ENCODE measurements at regions of chr3 and their contacts with region 1.

Region 1: DNA sequence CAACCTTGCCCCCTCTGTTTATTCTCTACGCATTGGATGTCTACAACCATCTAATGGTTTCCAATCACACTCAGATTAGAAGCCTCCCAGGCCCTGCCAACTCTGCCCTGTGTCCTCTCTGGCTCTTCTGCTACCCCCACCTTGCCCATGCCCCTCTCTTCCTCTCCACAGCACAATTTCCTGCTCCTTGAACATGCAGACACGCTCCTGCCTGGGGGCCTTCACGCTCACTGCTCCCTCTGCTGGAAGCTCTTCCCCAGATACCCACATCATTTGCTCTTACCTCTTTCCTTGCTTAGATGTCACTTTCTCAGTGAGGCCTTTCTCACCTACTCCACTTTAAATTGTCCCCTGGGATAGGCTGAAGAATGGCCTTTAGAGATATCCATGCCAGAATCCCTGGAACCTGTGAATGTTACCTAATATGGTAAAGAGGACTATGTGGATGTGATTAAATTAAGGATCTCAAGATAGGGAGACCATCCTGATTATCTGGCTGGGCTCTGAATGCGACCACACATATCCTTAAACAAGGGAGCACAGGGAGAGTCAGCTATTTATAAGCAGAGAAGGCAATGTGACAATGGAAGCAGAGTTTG is 9.9 kb downstream of the KY start:
- DNase-seq: peak in 1 of 2 experiments; percentile 57
- H3K4me3 ChIP-seq: no peak overlapping the region
- H3K27ac ChIP-seq: no peak overlapping the region
- H3K4me1 ChIP-seq: peaks cover 0 to 11% (median 5%) of the 10 kb centered on the region in 4 experiments; a peak in 3 of 7 replicates
- H3K27me3 ChIP-seq: peaks cover 0 to 5% (median 3%) of the 10 kb centered on the region in 4 experiments; a peak in 4 of 7 replicates
- CTCF ChIP-seq: peak; percentile 73 to 77 (median 73)
- EP300 ChIP-seq: no peak
- POLR2A ChIP-seq: no peak
- RAD21 ChIP-seq: peak; percentile 53 to 62

Region 2: DNA sequence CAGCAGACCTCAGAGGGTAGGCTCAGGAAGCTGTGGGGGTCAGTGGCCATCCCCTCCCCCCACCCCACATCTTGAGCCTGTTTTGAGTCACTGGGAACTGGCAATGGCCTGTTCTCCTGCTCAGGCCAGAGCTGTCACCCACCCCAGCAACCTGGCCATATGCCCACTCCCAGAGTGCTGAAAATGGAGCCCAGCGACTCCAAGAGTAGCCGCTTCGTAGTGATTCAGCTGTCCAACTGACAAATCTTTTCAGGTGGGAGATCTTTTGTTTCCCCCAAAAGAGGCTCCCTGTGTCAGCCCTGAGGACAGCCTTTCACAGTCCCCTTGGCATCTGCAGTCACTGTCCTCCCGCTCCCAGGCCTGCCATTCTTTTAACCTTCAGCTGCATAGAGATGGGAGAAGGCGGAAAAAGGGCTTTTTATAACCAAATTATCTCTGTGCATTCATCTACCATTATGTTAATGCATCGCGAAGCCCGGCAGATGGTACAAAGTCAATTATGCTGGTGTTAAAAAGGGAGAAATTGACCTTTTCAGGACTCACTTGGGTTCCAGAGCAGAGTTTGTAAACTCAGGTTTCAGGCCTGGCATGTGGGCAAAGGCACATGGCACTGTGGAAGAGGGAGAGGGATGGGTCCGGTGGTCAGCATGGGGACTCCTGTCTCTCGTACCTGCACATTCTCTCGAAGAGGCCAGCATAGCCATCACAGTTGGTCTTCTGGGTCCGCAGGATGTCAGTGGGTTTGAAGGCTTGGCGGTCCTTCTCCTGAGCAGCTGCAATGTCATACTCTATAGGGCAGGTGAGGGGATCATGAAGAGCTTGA is 22.3 kb before region 1 on chr3:
- CTCF ChIA-PET with region 1: interaction called, 25 read pairs
- POLR2A ChIA-PET with region 1: interaction called, 3 read pairs
- DNase-seq: peak in 1 of 2 experiments; percentile 33
- H3K4me3 ChIP-seq: no peak overlapping the region
- H3K27ac ChIP-seq: no peak overlapping the region
- H3K4me1 ChIP-seq: peaks cover 0 to 3% (median 0%) of the 10 kb centered on the region in 4 experiments; a peak in 1 of 7 replicates
- H3K27me3 ChIP-seq: no peaks in the 10 kb centered on the region
- CTCF ChIP-seq: no peak
- EP300 ChIP-seq: no peak
- POLR2A ChIP-seq: no peak
- RAD21 ChIP-seq: no peak

Region 3: DNA sequence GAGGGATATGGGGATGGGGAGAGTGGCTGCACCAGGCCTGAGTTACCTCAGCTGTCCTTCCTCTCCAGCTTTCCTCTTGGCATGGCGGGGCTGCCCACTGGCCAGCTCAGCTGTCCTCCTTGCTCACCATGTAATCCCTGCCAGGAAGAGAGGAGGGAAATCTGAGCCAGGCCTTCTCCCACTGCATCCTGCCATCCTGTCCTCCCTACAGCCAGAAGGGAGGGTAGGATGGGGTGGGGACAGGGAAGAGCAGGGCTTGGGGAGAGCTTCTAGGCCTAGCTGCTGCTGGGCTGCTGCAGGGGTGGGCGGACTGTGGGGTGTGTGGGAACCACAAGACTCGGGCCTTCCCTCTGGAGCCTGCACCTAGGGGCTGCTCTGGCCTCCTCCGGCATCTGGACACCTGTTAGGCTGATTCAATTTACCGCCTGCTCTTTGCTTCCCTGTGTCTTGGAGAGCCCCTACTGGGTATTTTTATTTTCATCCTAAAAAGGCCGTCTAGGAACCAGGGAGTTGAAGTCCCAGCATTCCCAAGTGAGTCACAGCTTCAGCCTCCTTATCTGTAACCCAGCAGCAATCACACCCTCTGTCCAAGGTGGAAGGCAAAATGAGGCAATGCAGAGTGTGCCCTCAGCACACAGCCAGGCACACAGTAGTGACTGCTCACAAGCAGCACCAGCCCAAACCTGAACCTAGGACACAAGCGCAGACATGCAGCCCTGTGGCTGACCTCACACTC is 22.9 kb after region 1 on chr3:
- CTCF ChIA-PET with region 1: interaction called, 11 read pairs
- POLR2A ChIA-PET with region 1: no interaction called
- DNase-seq: no peak
- H3K4me3 ChIP-seq: no peak overlapping the region
- H3K27ac ChIP-seq: no peak overlapping the region
- H3K4me1 ChIP-seq: peaks cover 0 to 5% (median 3%) of the 10 kb centered on the region in 4 experiments; a peak in 3 of 7 replicates
- H3K27me3 ChIP-seq: peaks cover 0 to 2% (median 0%) of the 10 kb centered on the region in 4 experiments; a peak in 2 of 7 replicates
- CTCF ChIP-seq: no peak
- EP300 ChIP-seq: no peak
- POLR2A ChIP-seq: no peak
- RAD21 ChIP-seq: no peak